ENCODE measurements at regions of chr14 and their contacts with region 1.

Region 1: DNA sequence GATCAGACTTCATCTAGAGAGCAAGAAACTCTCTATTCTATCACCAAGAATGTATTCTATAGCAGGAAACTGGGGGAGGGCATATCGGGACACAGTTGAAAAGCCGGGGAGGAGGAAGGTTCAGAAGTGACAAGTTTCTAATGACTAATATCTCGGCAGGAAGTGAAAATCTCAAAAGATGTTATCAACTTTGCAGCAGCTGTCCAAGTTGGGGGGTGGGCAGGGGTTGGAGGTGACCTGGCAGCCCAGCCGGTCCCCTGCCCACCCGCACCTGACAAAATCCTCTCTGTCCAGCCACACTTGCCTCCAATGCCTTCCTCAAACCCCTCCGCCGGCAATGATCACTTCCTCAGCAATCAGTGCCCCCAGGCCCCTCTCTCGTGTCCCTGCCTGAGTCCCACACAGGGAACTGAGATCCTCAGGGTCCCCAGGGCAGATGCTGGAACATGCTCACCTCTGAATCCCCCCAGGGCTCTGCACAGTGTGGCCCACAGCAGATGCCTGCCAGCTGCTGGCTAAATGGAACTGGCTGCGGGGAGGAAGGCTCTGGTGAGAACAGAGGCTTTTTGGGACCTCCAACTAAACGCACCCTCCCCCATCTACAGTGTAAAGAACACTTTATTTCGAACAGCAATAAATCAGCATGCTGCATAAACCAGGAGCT is 43.9 kb downstream of the CCDC88C start:
- DNase-seq: peak; percentile 55
- H3K4me3 Mint-ChIP-seq: peak overlapping the region; percentile 77
- H3K27ac Mint-ChIP-seq: peak overlapping the region; percentile 95
- H3K4me1 Mint-ChIP-seq: peaks cover 93% of the 10 kb centered on the region
- H3K27me3 Mint-ChIP-seq: no peaks in the 10 kb centered on the region

Region 2: GRCh38 chr14:91249841-91250616 is 123.7 kb before region 1 on chr14:
- intact Hi-C with region 1: loop called (anchors 5 kb)
- DNase-seq: peak; percentile 55
- H3K4me3 Mint-ChIP-seq: peak overlapping the region; percentile 23
- H3K27ac Mint-ChIP-seq: peak overlapping the region; percentile 92
- H3K4me1 Mint-ChIP-seq: peaks cover 68% of the 10 kb centered on the region
- H3K27me3 Mint-ChIP-seq: no peaks in the 10 kb centered on the region

Region 3: DNA sequence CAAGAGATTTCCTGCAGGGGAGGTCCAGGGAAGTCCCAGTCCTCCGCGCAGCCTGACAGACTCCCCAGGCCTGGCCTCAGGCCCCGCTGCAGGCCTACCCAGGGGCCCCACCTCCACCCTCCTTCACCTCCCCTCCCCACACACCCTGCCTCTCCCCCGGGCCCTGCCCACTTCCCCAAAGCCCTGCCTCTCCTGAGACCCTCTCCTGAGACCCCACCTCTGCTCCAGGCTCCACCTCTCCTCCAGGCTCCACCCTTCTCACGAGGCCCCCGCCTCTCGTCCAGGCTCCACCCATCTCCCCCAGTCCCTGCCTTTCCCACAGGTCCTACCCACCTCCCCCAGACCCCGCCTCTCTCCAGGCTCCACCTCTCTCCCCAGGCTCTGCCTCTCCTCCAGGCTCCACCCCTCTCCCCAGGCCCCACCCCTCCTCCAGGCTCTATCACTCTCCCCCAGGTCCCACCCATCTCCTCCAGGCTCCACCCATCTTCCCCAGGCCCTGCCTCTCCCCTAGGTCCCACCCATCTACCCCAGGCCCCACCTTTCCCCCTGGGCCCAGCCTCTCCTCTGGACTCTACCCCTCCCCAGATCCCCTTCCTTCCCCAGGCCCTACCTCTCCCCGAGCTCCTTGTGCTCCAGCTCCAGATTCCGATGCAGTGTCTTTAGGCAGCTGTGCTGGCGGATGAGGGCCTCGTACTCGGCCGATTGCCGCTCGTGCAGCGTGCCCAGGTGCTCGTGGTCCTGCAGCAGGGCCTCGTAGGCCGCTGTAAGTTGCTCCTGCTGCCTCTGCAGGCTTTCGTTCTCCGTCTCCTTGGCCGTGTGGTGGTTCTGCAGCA is 70.4 kb before region 1 on chr14:
- intact Hi-C with region 1: loop called (anchors 2 kb)
- DNase-seq: peak; percentile 56
- H3K4me3 Mint-ChIP-seq: peak overlapping the region; percentile 27
- H3K27ac Mint-ChIP-seq: peak overlapping the region; percentile 97
- H3K4me1 Mint-ChIP-seq: peaks cover 46% of the 10 kb centered on the region
- H3K27me3 Mint-ChIP-seq: no peaks in the 10 kb centered on the region

Region 4: GRCh38 chr14:91323671-91324605 is 49.8 kb before region 1 on chr14:
- intact Hi-C with region 1: loop called (anchors 1 kb)
- DNase-seq: peak; percentile 84
- H3K4me3 Mint-ChIP-seq: peak overlapping the region; percentile 75
- H3K27ac Mint-ChIP-seq: peak overlapping the region; percentile 99
- H3K4me1 Mint-ChIP-seq: peaks cover 47% of the 10 kb centered on the region
- H3K27me3 Mint-ChIP-seq: no peaks in the 10 kb centered on the region

Region 5: DNA sequence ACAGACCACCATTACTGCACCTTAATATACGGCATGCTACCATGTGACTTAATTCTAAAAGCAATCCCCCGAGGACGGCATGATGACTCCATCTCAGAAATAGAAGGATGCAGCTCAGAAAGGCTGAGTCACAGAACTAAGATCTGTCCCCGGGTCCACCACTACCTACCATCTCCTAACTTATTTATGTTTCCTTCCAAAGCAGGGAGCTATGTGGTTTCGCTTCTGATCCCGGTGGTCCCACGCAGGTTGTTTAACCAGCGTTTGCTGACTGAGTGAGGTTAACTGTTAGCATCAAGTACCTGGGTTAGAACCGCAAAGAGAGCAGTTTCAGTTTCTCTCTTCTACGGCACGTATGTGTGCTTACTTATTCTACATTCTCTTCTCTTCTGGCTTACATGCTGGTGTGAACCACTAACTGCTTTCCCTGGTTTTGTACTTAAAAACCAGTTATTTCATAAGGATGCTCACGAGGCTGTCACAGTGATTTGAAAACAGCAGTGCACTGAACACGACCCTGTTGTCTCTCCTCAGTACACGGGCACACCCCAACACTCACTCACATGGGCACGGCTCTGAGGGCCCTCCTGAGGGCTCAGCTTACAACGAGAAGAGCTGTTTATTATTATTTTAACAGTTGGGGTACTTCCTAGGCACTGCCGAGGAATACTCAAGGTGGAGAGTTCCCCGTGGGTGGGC is 22.8 kb before region 1 on chr14:
- intact Hi-C with region 1: loop called (anchors 1 kb)
- DNase-seq: peak; percentile 75
- H3K4me3 Mint-ChIP-seq: peak overlapping the region; percentile 72
- H3K27ac Mint-ChIP-seq: peak overlapping the region; percentile 87
- H3K4me1 Mint-ChIP-seq: peaks cover 80% of the 10 kb centered on the region
- H3K27me3 Mint-ChIP-seq: no peaks in the 10 kb centered on the region

Region 6: DNA sequence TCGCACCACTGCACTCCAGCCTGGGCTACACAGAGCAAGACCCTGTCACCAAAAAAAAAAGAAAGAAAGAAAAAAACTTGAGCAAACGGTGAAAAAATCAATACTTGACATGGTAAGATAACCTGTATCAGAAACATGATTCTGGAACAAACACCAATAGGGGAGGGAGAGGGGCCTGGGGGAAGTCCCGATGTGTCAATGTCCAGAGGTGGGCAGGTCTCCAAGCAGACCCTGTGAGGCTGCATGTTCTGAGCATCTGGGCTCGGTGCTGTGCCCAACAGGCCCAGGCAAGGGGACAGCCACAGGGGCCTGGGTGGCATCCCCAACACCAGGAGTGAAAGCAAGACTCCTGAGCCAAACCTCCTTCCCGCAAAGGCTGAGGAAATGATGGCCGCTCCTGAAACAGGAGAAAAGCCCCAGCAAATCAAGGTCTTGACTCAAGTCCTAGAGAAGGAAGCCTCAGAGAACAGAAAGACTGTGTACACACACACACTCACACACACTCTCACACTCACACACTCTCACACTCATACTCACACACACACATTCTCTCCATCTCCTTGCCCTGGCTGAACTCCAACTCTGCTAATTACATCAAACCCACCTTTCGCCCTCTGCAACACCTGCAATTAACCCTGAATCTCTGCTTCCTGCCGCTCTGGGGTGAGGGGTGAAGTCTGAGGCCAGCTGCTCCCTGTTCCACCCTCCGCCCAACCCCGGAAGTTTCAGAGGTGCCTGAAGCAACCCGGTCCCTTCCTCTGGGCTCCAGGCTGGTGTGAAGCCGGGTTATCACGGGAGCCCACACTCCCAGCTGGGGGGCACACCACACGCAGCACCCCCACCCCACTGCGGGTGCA is 23.5 kb after region 1 on chr14:
- intact Hi-C with region 1: loop called (anchors 2 kb)
- DNase-seq: peak; percentile 65
- H3K4me3 Mint-ChIP-seq: peak overlapping the region; percentile 68
- H3K27ac Mint-ChIP-seq: peak overlapping the region; percentile 80
- H3K4me1 Mint-ChIP-seq: peaks cover 70% of the 10 kb centered on the region
- H3K27me3 Mint-ChIP-seq: no peaks in the 10 kb centered on the region

Region 7: DNA sequence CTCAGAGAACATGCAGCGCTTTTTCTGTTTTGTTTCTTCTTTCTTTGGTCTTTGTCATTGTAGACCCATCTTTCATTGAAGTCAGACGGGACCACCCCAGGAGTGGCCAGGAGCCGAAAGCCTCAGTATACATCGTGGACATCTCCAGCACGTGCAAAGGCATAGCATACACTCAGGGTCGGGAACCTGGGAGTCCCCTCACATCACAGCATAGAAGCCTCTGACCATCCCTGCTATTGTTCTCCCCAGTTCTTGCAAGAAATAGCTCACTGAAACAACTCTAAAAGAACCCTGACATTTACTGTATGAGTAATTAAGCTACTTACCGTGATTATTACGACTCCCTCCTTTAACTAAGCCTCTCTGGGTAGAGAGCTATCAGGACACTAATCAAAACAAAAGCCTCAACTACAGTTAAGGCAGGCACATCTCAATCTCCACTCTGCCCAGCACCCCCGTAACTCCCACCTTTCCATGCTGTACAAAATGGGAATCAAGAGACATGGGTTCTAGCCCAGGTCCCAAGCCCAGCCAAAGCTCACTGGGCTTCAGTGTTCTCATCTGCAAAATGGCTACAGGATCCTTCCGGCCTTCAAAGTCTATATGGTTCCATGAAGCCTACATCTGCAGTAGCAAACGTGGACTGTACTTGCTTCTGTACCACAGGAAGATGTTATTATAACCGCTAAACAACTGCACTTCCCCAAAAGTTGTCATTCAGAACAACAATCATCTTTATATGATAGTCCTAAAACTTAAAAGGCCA is 37.2 kb after region 1 on chr14:
- intact Hi-C with region 1: loop called (anchors 1 kb)
- DNase-seq: no peak
- H3K4me3 Mint-ChIP-seq: peak overlapping the region; percentile 63
- H3K27ac Mint-ChIP-seq: peak overlapping the region; percentile 95
- H3K4me1 Mint-ChIP-seq: peaks cover 82% of the 10 kb centered on the region
- H3K27me3 Mint-ChIP-seq: no peaks in the 10 kb centered on the region

Measured in activated T-helper 2 cell treated with anti-CD3 and anti-CD28 coated beads, Interferon-gamma antibody, Interleukin-2, Interleukin-4, amounts not matched to agents 10 μg/mL and 5 μg/mL and 100 μg/mL, durations not matched to agents 14 hours and 24 hours and 36 hours (primary cell).